Ascending aorta (tissue), 2 donors: ENCODE measurements at regions of chr4 and their contacts with region 1.

Region 1: DNA sequence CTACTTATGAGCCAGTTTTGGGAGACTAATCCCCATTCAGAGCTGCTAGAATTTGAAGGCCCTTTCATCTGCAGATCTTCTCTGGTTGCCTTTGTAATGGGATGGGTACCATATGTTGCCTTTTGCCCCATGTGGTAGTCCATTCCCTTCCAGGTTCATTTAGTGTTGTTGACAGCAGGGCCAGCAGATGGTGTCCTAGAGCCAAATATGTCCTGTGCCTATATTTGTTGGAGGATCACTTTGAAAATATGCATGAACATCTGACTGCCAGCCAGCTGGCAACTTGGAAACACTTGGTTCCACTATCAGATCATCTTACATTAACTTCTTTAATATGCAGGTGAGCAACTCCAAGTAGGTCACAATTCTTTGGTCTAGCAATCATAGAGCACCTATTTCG is 30.4 kb downstream of the CFAP299 start:
- DNase-seq: no peak
- H3K4me3 ChIP-seq: no peak overlapping the region
- H3K27ac ChIP-seq: no peak overlapping the region
- H3K4me1 ChIP-seq: no peaks in the 10 kb centered on the region
- H3K27me3 ChIP-seq: no peaks in the 10 kb centered on the region
- CTCF ChIP-seq: peak in 1 of 3 experiments; percentile 7

Region 2: DNA sequence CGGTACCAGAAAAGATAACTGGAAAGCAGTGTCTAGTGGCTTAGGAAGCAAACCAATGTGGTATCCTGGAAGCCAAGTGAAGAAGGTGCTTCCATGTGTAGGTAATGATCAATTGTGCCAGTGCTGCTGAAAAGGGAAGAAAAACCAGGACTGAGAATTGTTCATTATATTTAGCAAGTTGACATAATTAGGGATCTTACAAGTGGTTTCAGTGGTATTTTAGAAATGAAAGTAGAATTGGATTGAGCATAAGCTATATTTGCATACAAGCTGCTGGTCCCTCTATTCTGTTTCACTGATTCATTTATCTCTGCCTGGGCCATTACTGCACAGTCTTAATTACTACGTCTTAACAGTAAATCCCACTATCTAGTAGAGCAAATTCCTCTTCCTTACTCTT is 136.3 kb before region 1 on chr4:
- intact Hi-C with region 1: no loop called
- DNase-seq: no peak
- H3K4me3 ChIP-seq: no peak overlapping the region
- H3K27ac ChIP-seq: no peak overlapping the region
- H3K4me1 ChIP-seq: no peaks in the 10 kb centered on the region
- H3K27me3 ChIP-seq: no peaks in the 10 kb centered on the region
- CTCF ChIP-seq: no peak

Region 3: DNA sequence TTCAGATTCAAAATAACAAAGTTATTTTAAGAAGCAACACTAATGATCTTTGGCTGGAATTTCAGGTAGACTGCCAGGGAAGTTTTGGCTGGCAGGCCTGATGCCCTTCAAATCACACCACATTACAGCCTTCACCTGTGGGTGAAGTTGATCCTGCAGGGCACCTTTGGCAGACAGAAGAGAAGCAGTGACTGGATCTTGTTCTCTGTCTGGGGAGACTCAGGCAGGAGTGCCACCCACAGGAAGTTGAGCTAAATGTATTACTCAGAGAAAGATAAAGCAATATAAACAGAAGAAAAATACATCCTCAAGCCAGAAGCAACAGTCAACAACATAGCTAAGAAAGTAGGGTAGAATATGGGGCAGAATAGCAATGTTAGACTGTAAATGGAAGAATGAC is 43.2 kb before region 1 on chr4:
- intact Hi-C with region 1: no loop called
- DNase-seq: no peak
- H3K4me3 ChIP-seq: no peak overlapping the region
- H3K27ac ChIP-seq: no peak overlapping the region
- H3K4me1 ChIP-seq: no peaks in the 10 kb centered on the region
- H3K27me3 ChIP-seq: no peaks in the 10 kb centered on the region
- CTCF ChIP-seq: no peak

Region 4: DNA sequence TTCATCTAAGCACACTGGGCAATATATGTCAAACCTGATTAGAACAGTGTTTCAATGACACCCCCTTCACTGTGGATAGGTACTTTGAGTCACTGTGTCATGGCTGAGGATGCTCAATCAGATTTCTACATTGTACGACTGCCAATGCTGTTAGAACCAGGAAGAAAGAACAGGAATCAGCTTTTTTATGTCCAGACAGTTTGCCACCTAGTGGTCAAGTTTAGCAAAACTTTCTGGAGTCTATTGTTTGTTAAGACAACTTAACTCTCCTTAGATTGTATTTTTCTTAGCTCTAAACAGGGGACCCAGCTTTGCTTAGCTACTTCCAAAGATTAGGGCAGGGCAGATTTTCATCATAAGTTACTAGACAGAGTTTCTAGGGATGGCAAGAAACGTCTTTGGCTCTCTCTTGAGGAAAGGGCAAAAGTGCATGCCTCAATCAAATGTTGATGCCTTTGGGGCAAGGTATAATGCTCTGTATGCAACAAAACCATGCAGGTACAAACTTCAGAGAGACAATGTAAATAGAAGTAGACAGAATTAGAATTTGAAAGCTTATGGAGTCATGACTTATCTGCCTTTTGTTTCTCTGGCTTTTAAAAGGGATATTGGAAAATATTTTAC is 624.1 kb after region 1 on chr4:
- intact Hi-C with region 1: loop called (anchors 10 kb)
- DNase-seq: no peak
- H3K4me3 ChIP-seq: no peak overlapping the region
- H3K27ac ChIP-seq: no peak overlapping the region
- H3K4me1 ChIP-seq: no peaks in the 10 kb centered on the region
- H3K27me3 ChIP-seq: no peaks in the 10 kb centered on the region
- CTCF ChIP-seq: peak in 2 of 3 experiments; percentile 30 to 51

Region 5: GRCh38 chr4:81052119-81053068 is 686.5 kb after region 1 on chr4:
- intact Hi-C with region 1: loop called (anchors 10 kb)
- DNase-seq: no peak
- H3K4me3 ChIP-seq: no peak overlapping the region
- H3K27ac ChIP-seq: no peak overlapping the region
- H3K4me1 ChIP-seq: no peaks in the 10 kb centered on the region
- H3K27me3 ChIP-seq: no peaks in the 10 kb centered on the region
- CTCF ChIP-seq: peak in 1 of 3 experiments; percentile 36